Posterior vena cava (tissue), 2 donors: ENCODE measurements at regions of chr1 and their contacts with region 1.

Region 1: DNA sequence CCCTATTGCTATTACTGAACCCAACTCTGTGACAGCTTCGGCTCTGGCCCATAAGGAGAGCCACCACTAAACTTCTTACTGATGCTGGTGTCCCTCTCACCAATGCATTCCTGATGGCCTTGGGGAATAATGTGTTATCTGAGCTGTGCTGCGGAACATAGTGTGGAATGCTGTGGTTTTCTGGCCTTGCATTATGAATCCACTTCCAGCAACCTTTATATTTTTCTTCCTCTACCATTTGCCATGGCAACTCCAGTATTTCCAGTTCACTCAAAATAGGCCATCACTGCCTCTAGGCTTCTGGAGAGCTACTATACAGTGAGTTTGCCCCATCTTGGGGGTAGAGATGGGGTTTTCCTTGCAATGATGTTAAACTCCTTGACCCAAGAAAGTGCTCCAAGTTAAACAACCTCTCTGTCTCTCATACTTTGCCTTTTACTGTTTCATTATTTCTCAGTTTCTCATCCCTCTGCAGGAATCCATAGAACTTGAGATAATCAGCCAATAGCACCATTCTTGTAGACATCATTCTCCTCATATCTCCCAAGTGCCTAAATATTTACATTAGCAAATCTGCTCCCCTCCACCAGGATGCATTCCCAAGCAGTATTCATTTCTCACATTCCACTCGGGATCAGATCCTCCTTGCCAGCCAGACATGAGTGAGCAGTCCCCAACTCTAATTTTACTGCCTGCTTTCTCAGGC is 11.1 kb upstream of the RAVER2 start:
- DNase-seq: no peak

Region 2: GRCh38 chr1:64696879-64697278 is 36.9 kb before region 1 on chr1:
- intact Hi-C with region 1: loop called in 1 of 2 experiments (anchors 1 kb)
- DNase-seq: no peak